ENCODE measurements at regions of chr6 and their contacts with region 1.

Region 1: DNA sequence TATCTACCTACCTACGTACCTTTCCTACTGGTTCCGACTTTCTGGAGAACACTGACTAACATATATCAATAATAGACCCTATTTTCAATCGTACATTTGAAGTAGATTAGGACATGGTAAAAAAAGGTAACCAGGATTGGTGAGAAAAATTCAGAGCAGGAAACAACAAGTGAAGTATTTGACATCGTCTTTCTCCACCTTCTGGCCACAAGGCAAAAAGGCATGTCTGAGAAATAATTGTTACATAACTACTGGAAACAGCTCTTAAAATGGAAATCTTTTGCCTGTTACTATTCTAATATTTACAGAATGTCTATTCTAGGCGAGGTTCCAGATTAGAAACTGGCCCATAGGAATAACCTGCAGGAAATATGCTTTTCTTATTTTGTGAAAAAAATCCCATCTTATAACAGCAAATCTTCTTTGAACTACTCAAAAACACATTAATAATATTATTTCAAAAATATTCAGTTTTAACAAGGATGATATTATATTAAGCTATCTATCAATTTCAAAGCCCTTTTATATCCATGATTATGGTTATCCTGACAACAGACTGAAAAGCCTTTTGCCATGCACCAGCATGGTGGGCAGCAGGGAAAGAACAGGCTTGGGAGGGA is 80.8 kb downstream of the RCAN2 start:
- H3K4me3 Mint-ChIP-seq: no peak overlapping the region
- H3K27ac Mint-ChIP-seq: no peak overlapping the region
- H3K4me1 Mint-ChIP-seq: no peaks in the 10 kb centered on the region
- H3K27me3 Mint-ChIP-seq: peaks cover 4% of the 10 kb centered on the region

Region 2: GRCh38 chr6:45929421-45930361 is 480.8 kb before region 1 on chr6:
- intact Hi-C with region 1: loop called (anchors 5 kb)
- H3K4me3 Mint-ChIP-seq: no peak overlapping the region
- H3K27ac Mint-ChIP-seq: no peak overlapping the region
- H3K4me1 Mint-ChIP-seq: no peaks in the 10 kb centered on the region
- H3K27me3 Mint-ChIP-seq: peaks cover 2% of the 10 kb centered on the region

Region 3: DNA sequence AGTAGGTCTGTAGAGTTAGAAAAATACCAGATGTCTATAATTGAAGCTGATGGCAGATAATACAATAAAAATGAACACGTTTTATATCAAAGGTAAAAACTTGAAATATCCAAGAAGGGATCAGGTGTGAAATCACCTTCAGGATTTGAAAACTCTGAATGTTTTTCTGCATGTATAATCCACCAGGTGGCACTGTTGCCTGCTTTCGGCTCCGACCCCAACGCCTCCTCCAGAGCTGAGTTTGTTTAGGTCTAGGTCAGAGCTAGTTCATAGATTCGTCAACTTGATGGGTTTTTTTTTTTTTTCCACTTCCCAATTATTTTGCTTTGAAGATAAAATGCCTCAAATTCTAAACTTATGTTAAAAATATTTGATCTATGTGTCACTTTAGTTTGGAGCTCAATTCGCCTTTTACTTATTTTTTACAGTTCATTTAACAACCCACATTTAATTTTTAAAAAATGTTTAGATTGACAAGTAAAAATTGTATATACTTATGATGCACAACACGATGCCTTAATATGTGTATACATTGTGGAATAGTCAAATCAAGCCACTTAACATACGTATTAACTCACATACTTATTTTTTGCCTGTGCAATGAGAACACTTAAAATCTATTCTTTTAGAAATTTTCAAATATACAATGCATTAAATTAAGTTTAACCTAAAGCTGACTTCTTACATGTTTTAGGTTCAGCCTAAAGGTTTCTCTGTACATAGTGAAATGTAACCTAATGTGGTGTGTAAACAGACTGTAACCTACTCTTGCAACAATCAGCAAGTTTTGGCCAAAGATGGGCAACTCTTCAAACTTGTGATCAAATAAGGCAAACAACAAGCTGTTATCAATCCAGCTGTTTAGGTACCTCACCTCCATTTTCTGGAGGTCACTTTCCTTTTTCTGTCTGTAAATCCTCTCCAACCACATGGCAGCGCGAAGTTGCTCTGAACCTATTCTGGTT is 320.0 kb before region 1 on chr6:
- intact Hi-C with region 1: loop called (anchors 1 kb)
- H3K4me3 Mint-ChIP-seq: no peak overlapping the region
- H3K27ac Mint-ChIP-seq: no peak overlapping the region
- H3K4me1 Mint-ChIP-seq: no peaks in the 10 kb centered on the region
- H3K27me3 Mint-ChIP-seq: peaks cover 12% of the 10 kb centered on the region

Region 4: GRCh38 chr6:46221222-46221793 is 189.1 kb before region 1 on chr6:
- intact Hi-C with region 1: loop called (anchors 2 kb)
- H3K4me3 Mint-ChIP-seq: no peak overlapping the region
- H3K27ac Mint-ChIP-seq: no peak overlapping the region
- H3K4me1 Mint-ChIP-seq: peaks cover 24% of the 10 kb centered on the region
- H3K27me3 Mint-ChIP-seq: peaks cover 14% of the 10 kb centered on the region